ENCODE measurements at regions of chr6 and their contacts with region 1.

Region 1: DNA sequence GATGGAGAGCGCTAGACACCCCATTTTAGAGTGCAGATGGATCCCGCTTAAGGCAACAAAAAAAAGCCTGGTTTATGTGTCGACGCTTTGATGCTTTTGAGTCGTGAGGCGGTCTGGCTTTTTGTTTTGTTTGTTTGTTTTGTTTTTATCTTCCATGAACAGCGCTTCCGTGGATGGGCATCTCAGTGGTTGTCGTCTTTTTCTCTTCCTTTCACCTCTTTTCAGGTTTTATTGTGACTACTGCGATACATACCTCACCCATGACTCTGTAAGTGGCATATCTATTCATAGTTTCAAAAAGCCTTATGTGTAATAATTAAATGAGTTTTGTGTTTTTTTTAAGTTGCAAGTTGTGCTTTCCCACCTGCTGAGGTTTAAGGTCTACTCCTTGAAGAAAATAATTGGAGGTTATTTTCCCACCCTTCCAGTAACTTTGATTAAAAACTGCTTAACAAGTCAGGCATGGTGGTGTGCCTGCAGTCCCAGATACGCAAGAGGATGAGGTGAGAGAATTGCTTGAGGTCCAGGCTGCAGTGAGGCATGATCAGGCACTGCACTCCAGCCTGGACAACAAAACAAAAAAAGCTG is 476 bp downstream of the SNRPC start:
- DNase-seq: no peak
- ATAC-seq: no peak
- H3K4me3 Mint-ChIP-seq: no peak overlapping the region
- H3K27ac Mint-ChIP-seq: no peak overlapping the region
- H3K4me1 Mint-ChIP-seq: peaks cover 18% of the 10 kb centered on the region
- H3K27me3 Mint-ChIP-seq: no peaks in the 10 kb centered on the region

Region 2: GRCh38 chr6:34656378-34657036 is 101.3 kb before region 1 on chr6:
- CTCF ChIA-PET with region 1: interaction called, 11 read pairs
- POLR2A ChIA-PET with region 1: interaction called, 6 read pairs
- DNase-seq: peak; percentile 41
- ATAC-seq: peak; percentile 72
- H3K4me3 Mint-ChIP-seq: peak overlapping the region; percentile 76
- H3K27ac Mint-ChIP-seq: peak overlapping the region; percentile 90
- H3K4me1 Mint-ChIP-seq: peaks cover 42% of the 10 kb centered on the region
- H3K27me3 Mint-ChIP-seq: no peaks in the 10 kb centered on the region

Region 3: DNA sequence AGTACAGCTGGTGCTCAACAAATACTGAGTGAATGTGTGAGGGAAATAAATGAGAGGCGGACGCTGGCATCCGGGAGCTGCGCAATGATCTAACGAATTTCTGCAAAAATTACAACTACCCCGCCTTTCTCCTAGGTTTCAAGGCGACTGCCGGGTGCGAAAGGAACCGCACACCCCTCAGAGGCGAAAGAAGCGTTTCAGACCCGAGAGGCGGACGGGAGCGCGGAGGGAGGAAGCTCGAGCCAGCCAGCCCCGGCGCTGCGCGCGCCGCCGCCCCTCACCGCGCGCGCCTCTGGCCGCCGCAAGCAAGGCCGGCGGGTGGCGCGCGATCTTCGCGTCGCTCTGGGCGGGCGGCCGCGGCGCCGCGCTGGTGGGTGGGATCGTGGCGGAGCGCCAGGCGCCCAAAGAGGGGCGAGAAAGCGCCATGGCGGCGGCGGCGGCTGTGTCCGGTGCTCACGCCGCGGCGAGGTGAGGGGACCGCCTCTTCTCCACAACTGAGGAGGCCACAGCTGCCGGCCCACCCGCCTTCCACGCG is 34.0 kb after region 1 on chr6 and contains the start of gene BLTP3A:
- CTCF ChIA-PET with region 1: interaction called, 13 read pairs
- POLR2A ChIA-PET with region 1: interaction called, 22 read pairs
- DNase-seq: peak; percentile 79
- ATAC-seq: peak; percentile 95
- H3K4me3 Mint-ChIP-seq: peak within 1 kb of the TSS; percentile 96
- H3K27ac Mint-ChIP-seq: peak within 1 kb of the TSS; percentile 96
- H3K4me1 Mint-ChIP-seq: peaks cover 20% of the 10 kb centered on the region
- H3K27me3 Mint-ChIP-seq: no peaks in the 10 kb centered on the region
- total RNA-seq, gene BLTP3A: 11.8 to 11.9 TPM

Region 4: GRCh38 chr6:34887753-34888513 is 130.2 kb after region 1 on chr6 and contains the start of gene TAF11:
- CTCF ChIA-PET with region 1: interaction called, 6 read pairs
- POLR2A ChIA-PET with region 1: interaction called, 20 read pairs
- DNase-seq: peak; percentile 95
- ATAC-seq: peak; percentile 85
- H3K4me3 Mint-ChIP-seq: peak within 1 kb of the TSS; percentile 97
- H3K27ac Mint-ChIP-seq: peak within 1 kb of the TSS; percentile 99
- H3K4me1 Mint-ChIP-seq: peaks cover 35% of the 10 kb centered on the region
- H3K27me3 Mint-ChIP-seq: peaks cover 7% of the 10 kb centered on the region
- total RNA-seq, gene TAF11: 28.3 to 31.9 TPM